Panc1 (cell line): ENCODE measurements at regions of chr4 and their contacts with region 1.

Region 1: GRCh38 chr4:161577579-161578301 is 586.1 kb downstream of the FSTL5 start:
- DNase-seq: no peak
- ATAC-seq: no peak
- H3K4me3 ChIP-seq: no peak overlapping the region
- H3K27ac ChIP-seq: no peak overlapping the region
- H3K4me1 ChIP-seq: no peaks in the 10 kb centered on the region
- H3K27me3 ChIP-seq: no peaks in the 10 kb centered on the region
- CTCF ChIP-seq: no peak

Region 2: DNA sequence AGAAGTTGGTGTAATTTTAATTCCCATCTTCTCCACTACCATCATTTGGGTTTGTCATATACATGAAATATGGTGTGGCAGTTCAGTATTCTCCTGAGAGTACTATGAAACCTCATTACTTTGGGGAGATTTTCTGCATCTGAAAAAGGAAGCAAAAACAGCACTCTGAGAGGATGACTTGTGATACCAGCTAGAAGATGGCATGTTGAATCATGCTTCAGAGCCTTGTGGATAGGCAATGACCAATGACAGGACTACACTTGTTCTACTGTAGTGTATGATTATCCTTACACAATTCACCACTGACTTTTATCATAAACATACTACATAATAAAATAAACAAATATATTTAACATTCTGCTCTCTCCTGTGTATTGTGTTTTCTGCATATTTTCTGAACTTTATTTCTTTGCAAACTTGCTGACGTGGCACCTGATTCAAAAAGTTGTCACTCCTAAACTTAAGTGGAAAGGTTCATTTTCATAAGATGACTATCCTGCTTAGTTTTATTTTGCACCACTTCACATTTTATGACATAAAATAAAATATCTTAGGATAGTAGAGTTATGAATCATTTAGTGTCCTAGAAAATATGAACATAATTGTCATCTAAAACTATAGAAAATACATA is 405.2 kb before region 1 on chr4:
- CTCF ChIA-PET with region 1: no interaction called
- POLR2A ChIA-PET with region 1: no interaction called
- in situ Hi-C with region 1: no loop called
- intact Hi-C with region 1: no loop called
- DNase-seq: no peak
- ATAC-seq: no peak
- H3K4me3 ChIP-seq: no peak overlapping the region
- H3K27ac ChIP-seq: no peak overlapping the region
- H3K4me1 ChIP-seq: no peaks in the 10 kb centered on the region
- H3K27me3 ChIP-seq: no peaks in the 10 kb centered on the region
- CTCF ChIP-seq: no peak

Region 3: GRCh38 chr4:161457311-161457710 is 120.4 kb before region 1 on chr4:
- CTCF ChIA-PET with region 1: no interaction called
- POLR2A ChIA-PET with region 1: no interaction called
- in situ Hi-C with region 1: no loop called
- intact Hi-C with region 1: no loop called
- DNase-seq: no peak
- ATAC-seq: no peak
- H3K4me3 ChIP-seq: no peak overlapping the region
- H3K27ac ChIP-seq: no peak overlapping the region
- H3K4me1 ChIP-seq: no peaks in the 10 kb centered on the region
- H3K27me3 ChIP-seq: no peaks in the 10 kb centered on the region
- CTCF ChIP-seq: no peak

Region 4: DNA sequence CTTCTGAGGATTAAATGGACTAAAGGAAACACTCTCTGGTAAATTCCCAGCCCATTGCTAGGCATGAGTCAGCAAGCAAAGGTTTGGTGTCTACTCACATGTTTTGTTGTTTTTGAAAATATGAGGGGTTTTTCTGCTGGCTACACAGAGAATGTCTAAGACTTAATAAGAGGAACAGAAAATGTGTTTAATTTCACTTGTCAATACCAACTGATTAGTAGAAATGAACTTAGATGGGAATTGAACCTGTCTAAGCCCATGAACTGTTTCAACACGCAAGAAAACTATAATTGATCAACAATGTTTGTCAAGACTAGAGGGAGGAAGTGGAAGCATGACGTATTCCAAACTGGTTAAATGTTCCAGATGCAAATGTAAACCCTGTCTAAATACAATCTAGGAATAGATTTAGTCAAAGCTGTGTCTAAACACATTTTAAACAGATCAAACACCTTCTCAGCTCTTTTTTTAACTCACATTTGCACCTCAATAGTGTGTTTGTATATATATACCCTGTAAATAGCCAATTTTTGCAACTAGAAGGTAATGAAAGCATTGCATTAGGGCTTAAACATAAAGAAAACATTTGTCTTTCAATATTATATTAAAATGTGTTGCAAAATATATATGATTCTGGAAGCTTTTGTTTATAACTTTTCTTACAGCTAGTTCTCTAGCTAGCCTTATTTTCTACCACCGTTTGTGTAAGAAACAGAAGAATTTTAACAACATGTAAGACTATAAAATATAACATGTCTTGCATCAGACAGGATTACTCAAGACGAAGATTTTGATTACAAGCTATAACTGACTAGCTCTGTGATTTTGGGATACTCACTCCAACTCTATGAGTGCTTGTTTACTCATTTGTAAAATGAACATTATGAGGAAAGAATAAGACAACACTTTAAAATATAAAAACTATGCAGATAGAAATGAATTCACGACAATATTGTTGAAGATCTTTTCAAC is 21.8 kb before region 1 on chr4:
- CTCF ChIA-PET with region 1: no interaction called
- POLR2A ChIA-PET with region 1: interaction called, 3 read pairs
- in situ Hi-C with region 1: no loop called
- intact Hi-C with region 1: loop called (anchors 1 kb)
- DNase-seq: peak; percentile 25
- ATAC-seq: no peak
- H3K4me3 ChIP-seq: no peak overlapping the region
- H3K27ac ChIP-seq: no peak overlapping the region
- H3K4me1 ChIP-seq: peaks cover 4% of the 10 kb centered on the region; the same call in 1 of the 2 replicates
- H3K27me3 ChIP-seq: no peaks in the 10 kb centered on the region
- CTCF ChIP-seq: no peak